Activated CD4-positive, alpha-beta memory T cell treated with anti-CD3 and anti-CD28 coated beads, Interleukin-2, amount 10 ng/mL, durations not matched to agents 7 days and 5 days (primary cell): ENCODE measurements at regions of chr6 and their contacts with region 1.

Region 1: GRCh38 chr6:7086488-7086887 is 21.3 kb upstream of the RREB1 start:
- DNase-seq: peak; percentile 19
- H3K4me3 Mint-ChIP-seq: peak overlapping the region; percentile 61
- H3K27ac Mint-ChIP-seq: no peak overlapping the region
- H3K4me1 Mint-ChIP-seq: peaks cover 27% of the 10 kb centered on the region
- H3K27me3 Mint-ChIP-seq: peaks cover 33% of the 10 kb centered on the region

Region 2: DNA sequence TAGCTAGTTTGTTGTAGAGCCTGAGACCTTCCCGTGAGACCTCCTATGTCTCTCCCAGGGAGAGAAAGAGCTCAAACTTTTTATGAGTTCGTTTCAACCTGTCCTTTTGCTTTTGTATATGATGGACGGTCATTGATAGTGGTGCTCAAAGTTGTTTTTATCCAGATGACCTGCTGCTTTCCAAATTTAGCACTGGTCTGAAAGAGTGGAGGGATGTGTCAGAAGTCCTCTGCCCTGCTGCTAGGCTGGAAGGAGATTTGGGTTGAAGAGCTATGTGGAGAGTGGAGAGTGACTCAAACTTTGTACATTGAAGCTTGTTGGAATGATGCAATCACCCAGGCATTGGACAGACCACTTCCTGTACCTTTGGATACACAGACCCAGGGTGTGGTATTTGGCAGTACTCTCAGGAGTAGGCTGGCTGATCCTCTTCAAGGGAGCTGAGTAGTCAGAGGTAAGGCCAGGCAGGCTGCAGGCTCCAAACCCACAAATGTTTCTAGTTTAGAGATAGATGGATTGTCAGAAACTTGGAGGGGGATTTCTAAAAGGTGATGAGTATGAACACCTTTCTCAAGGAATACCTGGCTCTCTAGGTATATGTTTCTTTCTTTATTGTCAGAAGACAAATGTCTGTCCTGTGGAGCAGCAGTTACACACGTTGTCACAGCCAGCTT is 28.1 kb before region 1 on chr6:
- CTCF ChIA-PET with region 1: no interaction called
- POLR2A ChIA-PET with region 1: no interaction called
- DNase-seq: peak; percentile 18
- H3K4me3 Mint-ChIP-seq: no peak overlapping the region
- H3K27ac Mint-ChIP-seq: no peak overlapping the region
- H3K4me1 Mint-ChIP-seq: peaks cover 6% of the 10 kb centered on the region
- H3K27me3 Mint-ChIP-seq: peaks cover 10% of the 10 kb centered on the region

Region 3: DNA sequence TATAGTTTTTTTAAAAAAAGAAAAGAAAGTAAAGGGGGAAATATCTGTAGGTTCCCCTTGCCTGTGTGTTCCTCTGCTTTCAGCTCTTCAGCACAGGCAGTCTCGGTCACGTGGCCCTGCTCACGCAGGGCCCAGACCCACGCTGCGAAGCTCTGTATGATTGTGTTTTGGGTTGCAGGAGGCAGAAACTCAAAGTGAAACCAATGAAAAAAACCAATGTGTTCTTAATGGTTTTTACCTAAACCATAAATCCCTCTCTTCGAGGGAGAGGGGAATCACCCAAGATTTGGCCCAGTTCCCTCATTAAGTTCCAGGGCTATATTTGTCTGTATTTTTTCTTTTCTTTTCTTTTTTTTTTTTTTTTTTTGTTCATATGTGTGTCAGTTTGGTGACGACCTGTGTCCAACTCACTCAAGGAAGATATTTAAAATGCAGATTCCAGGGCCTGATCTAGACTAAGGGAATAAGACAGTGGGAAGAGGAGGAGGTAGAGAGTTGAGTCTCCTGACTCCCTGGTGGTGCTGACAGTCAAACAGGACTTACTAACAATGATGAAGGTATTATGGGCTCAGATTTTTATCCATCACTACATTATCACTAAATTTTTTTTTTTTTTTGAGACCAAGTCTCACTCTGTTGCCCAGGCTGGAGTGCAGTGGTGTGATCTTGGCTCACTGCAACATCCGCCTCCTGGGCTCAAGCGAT is 12.5 kb before region 1 on chr6:
- CTCF ChIA-PET with region 1: no interaction called
- POLR2A ChIA-PET with region 1: interaction called, 11 read pairs
- DNase-seq: peak; percentile 69
- H3K4me3 Mint-ChIP-seq: no peak overlapping the region
- H3K27ac Mint-ChIP-seq: no peak overlapping the region
- H3K4me1 Mint-ChIP-seq: peaks cover 16% of the 10 kb centered on the region
- H3K27me3 Mint-ChIP-seq: peaks cover 54% of the 10 kb centered on the region

Region 4: DNA sequence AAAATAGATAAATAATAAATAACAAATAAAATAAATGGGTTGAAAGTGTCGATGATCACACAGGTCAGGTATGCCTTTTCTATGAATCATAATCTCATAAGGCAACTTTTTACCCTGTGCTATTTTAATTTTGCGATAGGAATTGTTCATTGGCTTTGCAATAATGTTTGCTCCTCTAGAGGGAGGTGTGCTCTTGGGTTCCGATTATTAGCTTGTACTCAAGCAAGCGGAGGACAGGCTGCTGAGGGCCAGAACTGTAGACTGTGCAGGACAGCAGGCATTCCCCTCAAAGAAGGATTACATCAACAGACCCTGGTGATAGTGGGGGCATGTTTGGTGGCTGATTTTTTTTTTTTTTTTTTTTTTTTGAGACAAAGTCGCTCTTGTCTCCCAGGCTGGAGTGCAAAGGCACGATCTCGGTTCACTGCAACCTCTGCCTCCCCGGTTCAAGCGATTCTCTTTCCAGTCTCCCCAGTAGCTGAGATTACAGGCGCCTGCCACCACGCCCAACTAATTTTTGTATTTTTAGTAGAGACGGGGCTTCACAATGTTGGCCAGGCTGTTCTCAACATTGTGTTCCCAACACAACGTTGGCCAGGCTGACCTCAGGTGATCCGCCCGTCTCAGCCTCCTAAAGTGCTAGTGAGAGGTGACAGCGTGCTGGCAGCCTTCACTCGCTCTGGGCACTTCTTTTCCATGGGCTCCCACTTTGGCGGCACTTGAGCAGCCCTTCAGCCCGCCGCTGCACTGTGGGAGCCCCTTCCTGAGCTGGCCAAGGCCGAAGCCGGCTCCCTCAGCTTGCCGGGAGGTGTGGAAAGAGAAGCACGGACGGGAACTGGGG is 338.7 kb after region 1 on chr6:
- CTCF ChIA-PET with region 1: no interaction called
- POLR2A ChIA-PET with region 1: no interaction called
- DNase-seq: no peak
- H3K4me3 Mint-ChIP-seq: no peak overlapping the region
- H3K27ac Mint-ChIP-seq: no peak overlapping the region
- H3K4me1 Mint-ChIP-seq: no peaks in the 10 kb centered on the region
- H3K27me3 Mint-ChIP-seq: no peaks in the 10 kb centered on the region